ENCODE measurements at regions of chr2 and their contacts with region 1.

Region 1: GRCh38 chr2:96638144-96639121 is at the start of gene KANSL3:
- DNase-seq: peak; percentile 95
- H3K4me3 ChIP-seq: peak within 1 kb of the TSS; percentile 93
- H3K27ac ChIP-seq: peak within 1 kb of the TSS; percentile 82
- H3K4me1 ChIP-seq: peaks cover 27% of the 10 kb centered on the region
- H3K27me3 ChIP-seq: no peaks in the 10 kb centered on the region
- CTCF ChIP-seq: no peak
- total RNA-seq, gene KANSL3: 71.8 and 77.9 TPM in 2 replicates

Region 2: GRCh38 chr2:96650641-96651040 is 12.2 kb after region 1 on chr2:
- CTCF ChIA-PET with region 1: no interaction called
- POLR2A ChIA-PET with region 1: interaction called, 13 read pairs
- intact Hi-C with region 1: no loop called
- DNase-seq: no peak
- H3K4me3 ChIP-seq: no peak overlapping the region
- H3K27ac ChIP-seq: no peak overlapping the region
- H3K4me1 ChIP-seq: no peaks in the 10 kb centered on the region
- H3K27me3 ChIP-seq: no peaks in the 10 kb centered on the region
- CTCF ChIP-seq: no peak

Region 3: DNA sequence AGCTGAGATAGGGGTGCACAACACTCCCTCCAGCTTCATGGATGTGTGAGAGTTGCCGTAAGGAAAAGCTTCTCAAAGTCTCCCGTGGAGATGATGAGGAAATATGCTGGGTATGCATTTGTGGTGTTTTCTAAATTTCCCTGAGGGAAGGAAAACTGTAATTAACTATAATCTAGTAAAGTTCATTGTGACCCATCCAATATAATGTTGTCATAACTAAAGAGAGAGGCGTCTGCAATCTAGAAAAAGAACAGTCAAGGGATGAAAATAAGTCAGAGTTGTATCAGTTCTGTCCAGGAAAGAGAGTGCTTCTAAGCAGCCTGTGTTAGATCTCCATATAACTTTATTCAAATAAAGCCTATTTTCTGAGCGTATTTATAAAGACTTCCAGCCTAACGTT is 108.7 kb after region 1 on chr2:
- CTCF ChIA-PET with region 1: no interaction called
- POLR2A ChIA-PET with region 1: no interaction called
- intact Hi-C with region 1: loop called (anchors 5 kb)
- DNase-seq: peak; percentile 70
- H3K4me3 ChIP-seq: peak overlapping the region; percentile 10
- H3K27ac ChIP-seq: no peak overlapping the region
- H3K4me1 ChIP-seq: peaks cover 19% of the 10 kb centered on the region
- H3K27me3 ChIP-seq: no peaks in the 10 kb centered on the region
- CTCF ChIP-seq: no peak

Region 4: DNA sequence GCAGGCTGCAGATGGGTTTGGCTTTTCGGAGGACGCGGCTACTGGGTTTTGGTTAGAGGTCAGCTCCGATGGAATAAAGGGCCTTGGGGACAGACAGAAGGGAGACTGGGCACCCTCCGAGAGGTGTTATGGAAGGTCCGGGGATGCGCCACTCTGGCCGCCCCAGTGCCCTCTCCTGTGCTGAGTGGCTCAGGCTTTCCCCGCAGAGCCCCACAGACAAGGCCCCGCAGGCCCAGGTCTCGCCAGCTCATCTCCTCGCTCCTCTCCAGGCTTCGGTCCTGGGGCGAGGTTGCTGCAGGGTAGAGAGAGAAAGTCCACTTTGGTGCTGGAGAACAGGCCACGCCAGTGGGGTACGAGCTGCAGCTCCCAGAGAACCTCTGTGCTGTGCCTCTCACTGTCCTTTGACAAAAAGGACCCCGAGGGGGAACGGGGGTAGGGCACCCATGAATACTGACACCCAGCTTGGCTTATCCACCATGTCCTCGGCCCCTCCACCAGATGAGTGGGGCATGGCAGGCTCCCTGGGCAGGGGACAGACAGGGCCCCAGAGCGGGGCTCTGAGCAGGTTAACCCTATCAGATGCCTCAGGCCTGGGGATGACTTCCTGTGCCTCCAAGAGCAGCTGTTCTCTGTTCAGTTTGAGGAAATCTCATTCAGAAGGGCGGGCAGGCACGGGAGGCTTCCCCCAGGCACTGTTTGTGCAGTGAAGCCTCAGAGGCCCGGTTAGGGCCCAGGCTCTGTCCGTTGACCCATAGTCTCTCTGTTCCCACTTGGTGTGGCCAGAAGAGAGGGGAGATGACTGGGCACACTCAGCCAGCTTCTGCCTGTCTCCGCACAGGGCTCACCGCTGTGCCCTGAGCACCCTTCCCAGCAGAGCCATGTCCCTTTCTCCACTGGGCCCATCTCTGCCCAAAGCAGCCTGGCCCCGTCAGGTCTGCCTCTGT is 161.9 kb after region 1 on chr2:
- CTCF ChIA-PET with region 1: no interaction called
- POLR2A ChIA-PET with region 1: no interaction called
- intact Hi-C with region 1: no loop called
- DNase-seq: no peak
- H3K4me3 ChIP-seq: no peak overlapping the region
- H3K27ac ChIP-seq: peak overlapping the region; percentile 19
- H3K4me1 ChIP-seq: no peaks in the 10 kb centered on the region
- H3K27me3 ChIP-seq: no peaks in the 10 kb centered on the region
- CTCF ChIP-seq: no peak

Region 5: DNA sequence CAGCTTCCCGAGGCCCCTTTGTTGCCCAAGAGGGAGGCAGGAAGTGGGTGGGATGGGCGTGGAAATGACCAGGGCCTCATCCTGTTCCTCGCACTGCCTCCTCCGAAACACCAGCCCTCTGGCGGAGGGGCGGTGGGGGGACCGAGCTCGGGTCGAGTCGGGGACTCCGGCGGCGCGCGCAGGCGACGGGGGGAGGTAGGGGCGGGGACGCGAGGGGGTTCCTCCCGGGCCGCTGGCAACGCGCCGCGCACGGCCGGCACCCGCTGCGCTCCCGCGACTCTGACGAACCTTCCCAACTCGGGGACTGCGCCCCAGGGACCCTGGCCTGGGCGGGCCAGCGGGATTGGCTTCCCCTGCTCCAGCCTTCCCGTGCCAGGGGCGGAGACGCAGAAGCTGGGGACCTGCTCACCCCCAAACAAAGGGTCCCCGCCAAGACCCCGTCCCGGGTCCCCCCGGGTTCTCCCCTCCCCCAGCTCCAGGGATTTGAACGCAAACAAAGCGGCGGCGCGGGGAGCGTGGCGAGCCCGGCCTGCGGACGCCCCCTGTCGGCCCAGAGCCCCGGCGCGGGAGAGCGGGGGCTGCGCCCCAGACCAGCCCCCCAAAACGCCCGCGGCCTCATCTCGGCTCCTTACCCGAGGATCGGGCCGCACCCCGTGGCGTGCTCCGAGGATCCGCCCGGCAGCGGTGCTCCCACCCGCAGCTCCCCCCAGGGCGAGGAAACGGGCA is 230.3 kb after region 1 on chr2:
- CTCF ChIA-PET with region 1: no interaction called
- POLR2A ChIA-PET with region 1: no interaction called
- intact Hi-C with region 1: no loop called
- DNase-seq: peak; percentile 95
- H3K4me3 ChIP-seq: peak overlapping the region; percentile 97
- H3K27ac ChIP-seq: peak overlapping the region; percentile 99
- H3K4me1 ChIP-seq: peaks cover 19% of the 10 kb centered on the region
- H3K27me3 ChIP-seq: no peaks in the 10 kb centered on the region
- CTCF ChIP-seq: peak; percentile 64

Measured in A673 (cell line).